PC-9 (cell line): ENCODE measurements at regions of chr9 and their contacts with region 1.

Region 1: GRCh38 chr9:33225319-33226149 is 14.4 kb upstream of the SPINK4 start:
- DNase-seq: peak; percentile 55 to 69
- H3K4me3 ChIP-seq: no peak overlapping the region
- H3K27ac ChIP-seq: no peak overlapping the region
- H3K4me1 ChIP-seq: peaks cover 25% of the 10 kb centered on the region
- H3K27me3 ChIP-seq: no peaks in the 10 kb centered on the region
- CTCF ChIP-seq: peak; percentile 78

Region 2: GRCh38 chr9:32579706-32580331 is 645.7 kb before region 1 on chr9:
- CTCF ChIA-PET with region 1: no interaction called
- POLR2A ChIA-PET with region 1: no interaction called
- intact Hi-C with region 1: loop called (anchors 5 kb)
- DNase-seq: peak; percentile 36 to 41
- H3K4me3 ChIP-seq: no peak overlapping the region
- H3K27ac ChIP-seq: no peak overlapping the region
- H3K4me1 ChIP-seq: no peaks in the 10 kb centered on the region
- H3K27me3 ChIP-seq: no peaks in the 10 kb centered on the region
- CTCF ChIP-seq: peak; percentile 88

Region 3: DNA sequence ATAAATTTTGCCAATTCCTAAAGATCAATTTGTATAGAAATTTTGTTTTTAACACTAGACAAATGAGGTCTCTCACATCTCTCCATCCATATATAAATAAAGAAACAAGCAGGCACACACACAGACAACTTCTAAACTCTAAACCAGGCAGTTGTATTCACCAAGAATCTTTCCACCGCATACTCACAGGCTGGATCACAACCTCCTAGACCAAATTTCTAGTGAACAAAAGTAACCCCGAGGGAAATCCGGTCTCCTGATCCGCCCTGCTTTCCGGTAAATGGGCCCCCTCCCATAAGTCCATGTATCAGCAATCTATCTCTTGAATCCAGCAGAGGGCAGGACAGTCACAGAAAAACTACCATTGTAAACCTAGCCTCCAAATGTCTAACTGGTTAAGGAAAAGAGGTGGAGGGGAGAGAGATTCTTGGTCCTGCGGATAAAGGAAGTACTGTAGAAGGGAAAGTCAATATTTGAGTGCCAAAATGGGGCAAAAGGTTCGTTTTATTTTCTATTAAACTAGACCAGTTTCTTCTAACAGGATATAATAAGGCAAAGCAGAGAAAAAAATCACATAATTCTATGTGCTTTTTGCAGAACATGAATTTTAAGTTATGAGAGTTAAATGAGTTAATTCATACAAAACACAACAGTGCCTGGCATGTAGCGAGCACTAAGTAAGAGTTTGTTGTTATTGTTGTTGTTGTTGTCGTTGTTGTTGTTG is 144.2 kb before region 1 on chr9:
- CTCF ChIA-PET with region 1: interaction called, 6 read pairs
- POLR2A ChIA-PET with region 1: no interaction called
- intact Hi-C with region 1: loop called (anchors 1 kb)
- DNase-seq: peak; percentile 49 to 56
- H3K4me3 ChIP-seq: no peak overlapping the region
- H3K27ac ChIP-seq: no peak overlapping the region
- H3K4me1 ChIP-seq: peaks cover 17% of the 10 kb centered on the region
- H3K27me3 ChIP-seq: no peaks in the 10 kb centered on the region
- CTCF ChIP-seq: peak; percentile 77

Region 4: DNA sequence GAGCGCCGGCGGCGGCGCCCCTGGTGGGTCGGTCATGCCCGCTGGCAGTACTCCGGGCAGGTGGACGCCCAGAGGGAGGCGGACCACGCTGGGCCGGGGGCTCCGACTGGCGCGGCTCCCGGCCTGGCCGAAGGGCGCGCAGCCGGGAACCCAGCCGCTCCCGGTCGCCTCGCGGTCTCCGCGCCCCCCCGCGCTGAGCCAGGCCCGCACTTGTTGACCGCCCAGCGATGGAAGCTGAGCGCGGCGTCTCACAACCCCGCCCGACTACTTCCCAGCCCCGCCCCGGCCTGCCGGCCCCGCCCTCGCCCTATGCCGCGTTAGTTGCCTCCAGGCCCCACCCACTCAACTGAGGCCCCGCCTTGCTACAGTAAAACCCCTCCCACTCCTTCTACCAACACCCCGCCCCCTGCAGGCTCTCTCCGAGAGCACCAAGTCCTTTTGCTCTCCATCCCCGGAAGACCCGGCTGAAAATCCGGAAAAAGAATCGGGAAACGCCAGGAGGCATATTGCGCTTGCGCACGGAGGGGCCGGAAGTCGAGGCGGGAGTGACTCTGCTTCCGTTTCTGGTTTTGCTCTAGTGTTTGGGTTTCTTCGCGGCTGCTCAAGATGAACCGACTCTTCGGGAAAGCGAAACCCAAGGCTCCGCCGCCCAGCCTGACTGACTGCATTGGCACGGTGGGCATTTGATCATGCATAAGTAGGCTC is 39.1 kb after region 1 on chr9 and contains the starts of genes BAG1 and CHMP5:
- CTCF ChIA-PET with region 1: no interaction called
- POLR2A ChIA-PET with region 1: no interaction called
- intact Hi-C with region 1: loop called (anchors 1 kb)
- DNase-seq: peak; percentile 94 to 97
- H3K4me3 ChIP-seq: peak within 1 kb of the TSS; percentile 89
- H3K27ac ChIP-seq: peak within 1 kb of the TSS; percentile 53
- H3K4me1 ChIP-seq: peaks cover 15% of the 10 kb centered on the region
- H3K27me3 ChIP-seq: no peaks in the 10 kb centered on the region
- CTCF ChIP-seq: peak; percentile 49; the same call in 1 of the 2 replicates
- total RNA-seq, gene BAG1: 21.9 and 35.5 TPM in 2 replicates
- total RNA-seq, gene CHMP5: 63.0 and 78.2 TPM in 2 replicates

Region 5: GRCh38 chr9:33320568-33321261 is 95.2 kb after region 1 on chr9:
- CTCF ChIA-PET with region 1: no interaction called
- POLR2A ChIA-PET with region 1: no interaction called
- intact Hi-C with region 1: no loop called
- DNase-seq: peak; percentile 37 to 90
- H3K4me3 ChIP-seq: peak overlapping the region; percentile 10; the same call in 1 of the 2 replicates
- H3K27ac ChIP-seq: peak overlapping the region; percentile 99
- H3K4me1 ChIP-seq: peaks cover 39% of the 10 kb centered on the region
- H3K27me3 ChIP-seq: no peaks in the 10 kb centered on the region
- CTCF ChIP-seq: no peak

Region 6: DNA sequence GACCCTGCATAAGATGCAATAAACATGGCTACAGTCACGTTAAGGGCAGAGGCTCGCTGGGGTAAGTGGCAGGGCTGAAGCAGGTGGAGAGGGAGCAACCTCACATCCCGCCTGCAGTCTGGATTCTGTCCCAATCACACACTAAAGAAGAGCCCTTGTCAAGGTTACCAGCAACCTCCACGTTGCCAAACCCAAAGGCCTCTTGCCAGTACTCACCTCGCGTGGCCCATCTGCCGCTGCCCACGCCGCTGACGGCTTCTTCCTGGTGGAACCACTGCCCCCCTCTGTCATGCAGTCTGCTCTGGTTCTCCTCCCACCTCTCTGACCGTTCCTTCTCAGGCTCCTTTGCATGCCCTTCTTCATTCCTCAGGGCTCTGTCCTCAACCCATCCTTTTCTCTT is 168.0 kb after region 1 on chr9:
- CTCF ChIA-PET with region 1: no interaction called
- POLR2A ChIA-PET with region 1: no interaction called
- intact Hi-C with region 1: loop called (anchors 2 kb)
- DNase-seq: no peak
- H3K4me3 ChIP-seq: no peak overlapping the region
- H3K27ac ChIP-seq: no peak overlapping the region
- H3K4me1 ChIP-seq: peaks cover 12% of the 10 kb centered on the region
- H3K27me3 ChIP-seq: no peaks in the 10 kb centered on the region
- CTCF ChIP-seq: no peak

Region 7: DNA sequence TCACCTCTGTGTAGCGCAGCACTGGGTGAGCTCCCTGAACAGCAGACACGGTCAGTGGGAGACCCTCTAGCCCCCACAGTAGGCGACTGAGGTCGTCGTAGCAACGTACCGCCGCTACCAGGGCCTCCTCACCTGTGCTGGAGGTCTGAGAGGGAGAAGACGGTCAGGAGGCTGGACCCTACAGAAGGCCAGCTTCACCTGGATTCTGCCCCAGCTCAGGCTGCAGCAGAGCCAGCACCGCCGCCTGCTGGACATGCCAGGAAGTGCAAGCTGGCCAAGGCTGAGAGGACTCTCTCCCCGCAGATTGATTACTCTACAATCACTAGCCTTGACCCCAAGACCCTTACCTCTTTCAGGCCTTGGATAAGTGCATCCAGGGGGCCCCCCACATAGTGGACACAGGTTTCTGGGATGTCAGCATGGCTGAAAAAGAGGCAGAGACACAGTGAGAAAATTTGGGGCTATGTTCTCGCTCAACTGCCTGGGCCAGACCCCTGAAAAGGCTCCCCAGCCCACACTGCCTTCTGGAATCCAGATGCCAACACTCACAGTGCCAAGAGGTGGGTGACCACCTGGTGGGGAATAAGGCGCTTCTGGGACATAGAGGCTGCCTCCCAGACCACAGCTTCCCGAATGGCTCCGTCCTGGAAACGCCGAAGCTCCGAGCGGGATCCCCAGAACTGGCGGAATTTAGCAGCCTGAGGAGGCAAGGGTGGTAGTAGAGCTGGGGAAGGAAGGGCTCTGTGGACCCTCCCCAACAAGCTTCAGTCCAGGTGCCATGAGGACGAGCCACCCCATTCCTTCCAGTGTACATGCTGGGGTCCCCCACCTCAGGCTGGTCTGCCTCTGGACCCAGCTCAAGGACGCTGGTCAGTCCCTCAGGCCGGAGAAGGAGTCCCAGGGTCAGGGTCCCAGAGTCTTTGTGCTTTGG is 241.3 kb after region 1 on chr9:
- CTCF ChIA-PET with region 1: no interaction called
- POLR2A ChIA-PET with region 1: no interaction called
- intact Hi-C with region 1: loop called (anchors 2 kb)
- DNase-seq: peak; percentile 36 to 68
- H3K4me3 ChIP-seq: no peak overlapping the region
- H3K27ac ChIP-seq: no peak overlapping the region
- H3K4me1 ChIP-seq: no peaks in the 10 kb centered on the region
- H3K27me3 ChIP-seq: no peaks in the 10 kb centered on the region
- CTCF ChIP-seq: peak; percentile 92